ENCODE measurements at regions of chr19 and their contacts with region 1.

Region 1: DNA sequence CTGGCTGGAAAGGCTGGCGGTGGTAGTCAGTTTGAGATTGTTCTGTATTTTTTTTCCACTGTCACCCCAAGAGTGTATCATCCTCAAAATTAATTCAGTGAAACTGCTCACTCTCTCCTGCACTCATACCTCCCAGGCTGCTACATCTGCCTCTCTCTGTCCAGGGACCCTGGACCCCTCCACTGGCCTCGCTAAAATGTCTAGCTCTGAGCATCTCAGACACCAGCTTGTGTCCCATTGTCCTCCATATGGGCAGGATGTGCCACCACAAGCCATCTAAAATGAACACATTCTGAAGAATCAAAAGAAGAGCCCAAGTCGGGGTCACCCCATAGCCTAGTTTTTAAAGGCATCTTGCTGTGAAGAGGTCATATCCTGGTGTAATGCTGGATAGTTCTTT is 345.5 kb upstream of the TSHZ3 start:
- DNase-seq: no peak
- ATAC-seq: no peak
- H3K4me3 ChIP-seq: no peak overlapping the region
- H3K4me3 Mint-ChIP-seq: no peak overlapping the region
- H3K27ac ChIP-seq: no peak overlapping the region
- H3K27ac Mint-ChIP-seq: no peak overlapping the region
- H3K4me1 ChIP-seq: no peaks in the 10 kb centered on the region
- H3K4me1 Mint-ChIP-seq: no peaks in the 10 kb centered on the region
- H3K27me3 ChIP-seq: no peaks in the 10 kb centered on the region
- H3K27me3 Mint-ChIP-seq: peaks cover 2% of the 10 kb centered on the region
- CTCF ChIP-seq: no peak

Region 2: GRCh38 chr19:30492586-30493270 is 1202.0 kb before region 1 on chr19:
- CTCF ChIA-PET with region 1: no interaction called
- POLR2A ChIA-PET with region 1: no interaction called
- intact Hi-C with region 1: loop called in 1 of 2 experiments (anchors 5 kb)
- DNase-seq: no peak
- ATAC-seq: no peak
- H3K4me3 ChIP-seq: no peak overlapping the region
- H3K4me3 Mint-ChIP-seq: no peak overlapping the region
- H3K27ac ChIP-seq: no peak overlapping the region
- H3K27ac Mint-ChIP-seq: no peak overlapping the region
- H3K4me1 ChIP-seq: no peaks in the 10 kb centered on the region
- H3K4me1 Mint-ChIP-seq: no peaks in the 10 kb centered on the region
- H3K27me3 ChIP-seq: no peaks in the 10 kb centered on the region
- H3K27me3 Mint-ChIP-seq: peaks cover 24% of the 10 kb centered on the region
- CTCF ChIP-seq: no peak

Region 3: GRCh38 chr19:31600731-31601295 is 93.9 kb before region 1 on chr19:
- CTCF ChIA-PET with region 1: no interaction called
- POLR2A ChIA-PET with region 1: no interaction called
- intact Hi-C with region 1: no loop called
- DNase-seq: peak in 1 of 9 experiments; percentile 32
- ATAC-seq: no peak
- H3K4me3 ChIP-seq: no peak overlapping the region
- H3K4me3 Mint-ChIP-seq: no peak overlapping the region
- H3K27ac ChIP-seq: no peak overlapping the region
- H3K27ac Mint-ChIP-seq: no peak overlapping the region
- H3K4me1 ChIP-seq: no peaks in the 10 kb centered on the region
- H3K4me1 Mint-ChIP-seq: no peaks in the 10 kb centered on the region
- H3K27me3 ChIP-seq: no peaks in the 10 kb centered on the region
- H3K27me3 Mint-ChIP-seq: no peaks in the 10 kb centered on the region
- CTCF ChIP-seq: no peak

Region 4: DNA sequence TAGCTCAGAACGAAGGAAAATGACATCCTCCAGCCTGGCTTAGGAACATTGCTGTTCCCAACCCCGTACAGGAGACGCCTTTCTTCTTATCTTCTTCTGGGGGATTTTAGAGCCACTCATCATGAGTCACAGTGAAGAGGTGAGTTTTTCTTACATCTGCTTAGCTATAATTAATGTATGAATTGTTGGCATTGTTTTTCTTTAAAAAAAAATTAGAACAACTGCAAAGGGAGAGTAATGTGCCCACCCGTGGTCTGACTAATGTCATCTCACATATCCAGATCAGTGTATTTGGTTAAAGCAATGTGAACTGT is 34.9 kb before region 1 on chr19:
- CTCF ChIA-PET with region 1: no interaction called
- POLR2A ChIA-PET with region 1: no interaction called
- intact Hi-C with region 1: no loop called
- DNase-seq: no peak
- ATAC-seq: no peak
- H3K4me3 ChIP-seq: no peak overlapping the region
- H3K4me3 Mint-ChIP-seq: no peak overlapping the region
- H3K27ac ChIP-seq: no peak overlapping the region
- H3K27ac Mint-ChIP-seq: no peak overlapping the region
- H3K4me1 ChIP-seq: no peaks in the 10 kb centered on the region
- H3K4me1 Mint-ChIP-seq: no peaks in the 10 kb centered on the region
- H3K27me3 ChIP-seq: no peaks in the 10 kb centered on the region
- H3K27me3 Mint-ChIP-seq: peaks cover 5% of the 10 kb centered on the region
- CTCF ChIP-seq: no peak